Common myeloid progenitor, CD34-positive (primary cell): ENCODE measurements at regions of chr18 and their contacts with region 1.

Region 1: GRCh38 chr18:35240664-35241447 is at the start of gene ZNF397:
- DNase-seq: peak; percentile 96 to 97 (median 97)
- H3K4me3 ChIP-seq: peak within 1 kb of the TSS; percentile 69 to 91 (median 82)
- H3K27ac ChIP-seq: peak within 1 kb of the TSS; percentile 93 to 99
- H3K4me1 ChIP-seq: peaks cover 0 to 17% (median 6%) of the 10 kb centered on the region in 4 experiments
- H3K27me3 ChIP-seq: no peaks in the 10 kb centered on the region

Region 2: DNA sequence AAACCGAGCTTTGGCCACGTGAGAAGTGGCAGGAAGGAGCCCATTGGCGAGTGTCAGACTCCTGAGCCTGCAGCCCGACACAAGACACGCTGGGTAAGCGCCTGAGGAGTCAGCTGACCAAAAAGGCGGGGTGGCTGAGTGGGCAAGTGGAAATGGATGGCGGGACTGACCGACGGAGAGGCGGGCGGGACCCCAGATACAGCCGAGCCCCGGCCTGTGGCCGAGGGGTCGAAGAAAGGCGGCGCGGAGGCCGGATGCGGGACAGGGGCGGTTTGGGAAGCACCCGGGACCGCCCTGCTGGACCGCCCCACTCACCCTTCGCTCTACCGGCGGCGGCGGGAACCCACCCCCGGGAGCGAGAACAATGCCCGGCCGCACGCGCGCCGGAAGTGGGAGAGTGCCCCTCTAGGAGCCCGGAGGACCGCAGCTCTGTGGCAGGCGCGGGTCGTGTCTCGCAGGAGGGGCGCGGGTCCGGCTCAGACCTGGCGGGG is 26.4 kb after region 1 on chr18:
- CTCF ChIA-PET with region 1: interaction called, 4 read pairs
- POLR2A ChIA-PET with region 1: interaction called, 14 read pairs
- DNase-seq: peak; percentile 88 to 95 (median 90)
- H3K4me3 ChIP-seq: peak overlapping the region; percentile 23 to 78 (median 67)
- H3K27ac ChIP-seq: peak overlapping the region; percentile 54 to 82
- H3K4me1 ChIP-seq: peaks cover 0 to 11% (median 8%) of the 10 kb centered on the region in 4 experiments
- H3K27me3 ChIP-seq: no peaks in the 10 kb centered on the region

Region 3: GRCh38 chr18:35290073-35290735 is 49.3 kb after region 1 on chr18 and contains the start of gene ZSCAN30:
- CTCF ChIA-PET with region 1: no interaction called
- POLR2A ChIA-PET with region 1: interaction called, 10 read pairs
- DNase-seq: peak; percentile 97 to 99 (median 98)
- H3K4me3 ChIP-seq: peak within 1 kb of the TSS; percentile 59 to 98 (median 93)
- H3K27ac ChIP-seq: peak within 1 kb of the TSS; percentile 91 to 96
- H3K4me1 ChIP-seq: peaks cover 8 to 19% (median 14%) of the 10 kb centered on the region in 4 experiments
- H3K27me3 ChIP-seq: no peaks in the 10 kb centered on the region